Uterus (tissue), 4 donors: ENCODE measurements at regions of chr3 and their contacts with region 1.

Region 1: GRCh38 chr3:137474932-137475331 is 289.2 kb upstream of the SOX14 start:
- DNase-seq: no peak
- H3K4me3 ChIP-seq: no peak overlapping the region
- H3K27ac ChIP-seq: no peak overlapping the region
- H3K4me1 ChIP-seq: no peaks in the 10 kb centered on the region
- H3K27me3 ChIP-seq: no peaks in the 10 kb centered on the region
- CTCF ChIP-seq: no peak
- POLR2A ChIP-seq: no peak

Region 2: GRCh38 chr3:136576279-136577009 is 898.5 kb before region 1 on chr3:
- intact Hi-C with region 1: no loop called
- DNase-seq: no peak
- H3K4me3 ChIP-seq: no peak overlapping the region
- H3K27ac ChIP-seq: no peak overlapping the region
- H3K4me1 ChIP-seq: no peaks in the 10 kb centered on the region
- H3K27me3 ChIP-seq: no peaks in the 10 kb centered on the region
- CTCF ChIP-seq: no peak
- POLR2A ChIP-seq: no peak

Region 3: DNA sequence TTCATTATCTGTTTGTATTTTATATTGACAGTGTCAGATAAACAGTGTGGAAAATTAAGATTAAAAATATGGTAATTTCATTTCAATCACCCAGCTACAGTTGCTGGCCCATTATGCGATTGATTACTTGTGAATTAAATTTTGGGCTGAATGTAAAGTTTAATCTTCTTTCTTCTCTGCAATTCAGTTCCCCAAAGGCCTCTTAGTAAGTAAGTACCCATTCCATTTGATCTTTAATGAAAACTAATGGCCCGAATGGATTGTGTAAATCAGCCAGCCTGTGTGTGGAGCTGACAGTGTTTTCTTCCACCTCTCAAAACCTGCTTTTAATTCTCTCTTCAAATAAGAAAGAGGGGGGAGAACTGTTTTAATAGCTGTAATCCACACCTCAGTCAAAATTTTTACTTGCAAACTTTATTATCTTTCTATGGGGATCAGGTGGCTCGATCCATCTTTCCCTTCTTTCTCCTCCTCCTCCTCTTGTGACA is 210.0 kb before region 1 on chr3:
- intact Hi-C with region 1: loop called (anchors 10 kb)
- DNase-seq: no peak
- H3K4me3 ChIP-seq: no peak overlapping the region
- H3K27ac ChIP-seq: no peak overlapping the region
- H3K4me1 ChIP-seq: no peaks in the 10 kb centered on the region
- H3K27me3 ChIP-seq: no peaks in the 10 kb centered on the region
- CTCF ChIP-seq: no peak
- POLR2A ChIP-seq: no peak